CD4-positive, alpha-beta memory T cell (primary cell): ENCODE measurements at regions of chr7 and their contacts with region 1.

Region 1: GRCh38 chr7:38369816-38370493 is 96.5 kb upstream of the TARP start:
- DNase-seq: peak; percentile 50 to 78 (median 66)
- H3K4me3 ChIP-seq: no peak overlapping the region
- H3K4me3 Mint-ChIP-seq: peak overlapping the region in 6 of 8 donors; percentile 30 to 70 (median 59)
- H3K27ac ChIP-seq: peak overlapping the region; percentile 33
- H3K27ac Mint-ChIP-seq: peak overlapping the region; percentile 24 to 96 (median 81)
- H3K4me1 ChIP-seq: peaks cover 62% of the 10 kb centered on the region
- H3K4me1 Mint-ChIP-seq: peaks cover 45 to 80% (median 54%) of the 10 kb centered on the region in 4 donors
- H3K27me3 ChIP-seq: no peaks in the 10 kb centered on the region
- H3K27me3 Mint-ChIP-seq: no peaks in the 10 kb centered on the region

Region 2: DNA sequence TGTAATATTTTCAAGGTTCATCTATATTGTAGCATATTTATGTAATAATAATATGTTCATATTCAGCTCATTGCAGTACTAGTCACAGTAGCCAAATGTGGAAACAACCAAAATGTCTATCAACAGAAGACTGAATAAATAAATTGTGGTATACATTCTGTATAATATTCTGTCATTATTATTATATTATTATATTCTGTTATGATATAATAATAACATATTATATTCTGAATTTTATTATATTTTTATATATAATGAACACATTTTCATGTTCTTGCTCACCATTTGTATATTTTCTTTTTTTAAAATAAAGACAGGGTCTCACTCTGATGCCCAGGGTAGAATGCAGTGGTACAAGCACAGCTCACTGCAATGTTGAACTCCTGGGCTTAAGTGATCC is 283.1 kb before region 1 on chr7:
- CTCF ChIA-PET with region 1: no interaction called
- POLR2A ChIA-PET with region 1: no interaction called
- intact Hi-C with region 1: no loop called
- DNase-seq: no peak
- H3K4me3 ChIP-seq: no peak overlapping the region
- H3K4me3 Mint-ChIP-seq: no peak overlapping the region
- H3K27ac ChIP-seq: no peak overlapping the region
- H3K27ac Mint-ChIP-seq: no peak overlapping the region
- H3K4me1 ChIP-seq: no peaks in the 10 kb centered on the region
- H3K4me1 Mint-ChIP-seq: no peaks in the 10 kb centered on the region
- H3K27me3 ChIP-seq: no peaks in the 10 kb centered on the region
- H3K27me3 Mint-ChIP-seq: peaks cover 1 to 7% of the 10 kb centered on the region in 2 donors

Region 3: DNA sequence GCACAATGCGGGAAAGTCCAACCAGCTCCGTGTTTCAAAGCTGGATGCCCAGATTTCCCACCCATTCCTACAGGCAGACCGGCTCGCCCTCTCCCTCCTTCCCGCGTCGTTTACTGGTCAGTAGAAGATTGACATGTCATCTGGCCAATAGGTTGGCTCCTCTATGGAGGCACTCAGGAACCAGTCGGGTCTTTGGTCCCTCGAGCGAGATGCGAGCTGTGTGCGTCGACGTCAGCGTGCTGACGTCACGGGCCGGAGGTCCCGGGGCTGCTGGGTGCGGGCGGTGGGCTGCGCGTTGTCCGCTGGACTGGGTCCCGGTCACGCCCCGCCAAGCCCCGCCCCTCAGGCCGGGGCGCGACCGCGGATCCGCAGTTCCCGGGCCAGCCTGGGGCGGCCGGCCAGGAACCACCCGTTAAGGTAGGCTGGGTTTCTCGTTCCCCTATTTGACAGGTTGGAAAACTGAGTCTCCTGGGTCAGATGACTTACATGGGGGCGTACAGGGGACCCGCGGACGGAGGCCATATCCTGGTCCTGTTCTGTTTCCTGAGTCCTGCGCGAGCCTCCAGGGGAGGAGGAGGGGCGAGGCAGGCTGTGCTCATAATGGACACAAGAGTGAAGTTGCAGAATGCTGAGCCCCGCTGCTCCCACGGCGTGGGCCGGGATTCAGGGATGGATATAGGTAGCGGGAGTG is 191.8 kb before region 1 on chr7 and contains the start of gene STARD3NL:
- CTCF ChIA-PET with region 1: interaction called, 22 read pairs
- POLR2A ChIA-PET with region 1: no interaction called
- intact Hi-C with region 1: no loop called
- DNase-seq: peak; percentile 90 to 97 (median 91)
- H3K4me3 ChIP-seq: peak within 1 kb of the TSS; percentile 97 to 98
- H3K4me3 Mint-ChIP-seq: peak within 1 kb of the TSS; percentile 92 to 100 (median 98)
- H3K27ac ChIP-seq: peak within 1 kb of the TSS; percentile 85
- H3K27ac Mint-ChIP-seq: peak within 1 kb of the TSS; percentile 92 to 98 (median 97)
- H3K4me1 ChIP-seq: peaks cover 27% of the 10 kb centered on the region
- H3K4me1 Mint-ChIP-seq: peaks cover 20 to 34% (median 27%) of the 10 kb centered on the region in 4 donors
- H3K27me3 ChIP-seq: no peaks in the 10 kb centered on the region
- H3K27me3 Mint-ChIP-seq: peaks cover 8 to 11% of the 10 kb centered on the region in 2 donors
- total RNA-seq, gene STARD3NL: 11.4 to 12.6 TPM

Region 4: DNA sequence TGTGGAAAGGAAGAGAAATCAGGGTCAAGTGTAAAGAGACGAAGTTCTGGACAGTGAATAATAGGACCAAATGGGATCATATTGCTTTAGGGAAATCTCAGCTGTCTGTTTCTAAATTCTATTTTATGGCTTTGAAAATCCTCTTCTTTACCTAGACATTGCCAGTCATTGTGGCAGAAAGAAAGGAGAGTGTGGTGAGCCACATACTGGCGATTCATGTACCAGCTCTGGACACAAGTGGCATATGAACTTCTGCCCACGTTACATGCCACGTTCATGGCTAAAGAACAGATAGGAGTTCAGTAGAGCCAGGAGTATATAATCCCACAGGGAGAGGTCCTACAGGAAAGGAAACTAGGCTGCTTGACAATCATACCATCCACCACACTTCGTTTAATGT is 163.9 kb before region 1 on chr7:
- CTCF ChIA-PET with region 1: interaction called, 58 read pairs
- POLR2A ChIA-PET with region 1: no interaction called
- intact Hi-C with region 1: no loop called
- DNase-seq: no peak
- H3K4me3 ChIP-seq: no peak overlapping the region
- H3K4me3 Mint-ChIP-seq: no peak overlapping the region
- H3K27ac ChIP-seq: no peak overlapping the region
- H3K27ac Mint-ChIP-seq: peak overlapping the region in 3 of 7 donors; percentile 25 to 48 (median 37)
- H3K4me1 ChIP-seq: no peaks in the 10 kb centered on the region
- H3K4me1 Mint-ChIP-seq: peaks cover 0 to under 1% (median 0%) of the 10 kb centered on the region in 4 donors
- H3K27me3 ChIP-seq: no peaks in the 10 kb centered on the region
- H3K27me3 Mint-ChIP-seq: no peaks in the 10 kb centered on the region

Region 5: GRCh38 chr7:38232502-38233366 is 137.2 kb before region 1 on chr7:
- CTCF ChIA-PET with region 1: interaction called, 42 read pairs
- POLR2A ChIA-PET with region 1: interaction called, 8 read pairs
- intact Hi-C with region 1: no loop called
- DNase-seq: peak; percentile 79 to 91 (median 89)
- H3K4me3 ChIP-seq: peak overlapping the region in 1 of 2 donors; percentile 38
- H3K4me3 Mint-ChIP-seq: peak overlapping the region; percentile 39 to 88 (median 82)
- H3K27ac ChIP-seq: peak overlapping the region; percentile 61
- H3K27ac Mint-ChIP-seq: peak overlapping the region; percentile 91 to 96 (median 96)
- H3K4me1 ChIP-seq: peaks cover 77% of the 10 kb centered on the region
- H3K4me1 Mint-ChIP-seq: peaks cover 27 to 96% (median 67%) of the 10 kb centered on the region in 4 donors
- H3K27me3 ChIP-seq: no peaks in the 10 kb centered on the region
- H3K27me3 Mint-ChIP-seq: no peaks in the 10 kb centered on the region

Region 6: DNA sequence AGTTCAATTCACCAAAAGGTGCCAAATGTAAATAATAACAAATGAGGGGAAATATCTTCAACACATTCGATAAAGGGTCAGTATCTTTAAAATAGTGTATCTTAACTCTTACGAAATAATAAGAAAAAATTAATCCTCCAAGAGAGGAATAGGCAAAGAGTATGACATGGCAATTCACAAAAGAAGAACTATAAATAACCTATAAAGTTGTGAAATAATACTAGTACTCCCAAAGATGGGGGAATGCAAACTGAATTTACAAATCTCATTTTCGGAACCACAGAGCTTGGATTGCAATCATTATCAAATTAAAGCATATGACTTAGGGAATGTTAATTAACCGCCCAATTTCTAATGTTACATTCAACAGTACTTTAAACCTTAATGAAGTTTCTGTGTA is 18.4 kb before region 1 on chr7:
- CTCF ChIA-PET with region 1: interaction called, 137 read pairs
- POLR2A ChIA-PET with region 1: interaction called, 3 read pairs
- intact Hi-C with region 1: no loop called
- DNase-seq: no peak
- H3K4me3 ChIP-seq: no peak overlapping the region
- H3K4me3 Mint-ChIP-seq: peak overlapping the region; percentile 86 to 94 (median 90)
- H3K27ac ChIP-seq: no peak overlapping the region
- H3K27ac Mint-ChIP-seq: peak overlapping the region in 4 of 7 donors; percentile 52 to 92 (median 73)
- H3K4me1 ChIP-seq: peaks cover 12% of the 10 kb centered on the region
- H3K4me1 Mint-ChIP-seq: peaks cover 14 to 42% (median 26%) of the 10 kb centered on the region in 4 donors
- H3K27me3 ChIP-seq: no peaks in the 10 kb centered on the region
- H3K27me3 Mint-ChIP-seq: no peaks in the 10 kb centered on the region